ENCODE measurements at regions of chr3 and their contacts with region 1.

Region 1: GRCh38 chr3:100463002-100463401 is 29.4 kb upstream of the TMEM45A start:
- DNase-seq: no peak
- H3K4me3 ChIP-seq: no peak overlapping the region
- H3K27ac ChIP-seq: no peak overlapping the region
- H3K4me1 ChIP-seq: no peaks in the 10 kb centered on the region
- H3K27me3 ChIP-seq: no peaks in the 10 kb centered on the region
- CTCF ChIP-seq: peak; percentile 60 to 80

Region 2: DNA sequence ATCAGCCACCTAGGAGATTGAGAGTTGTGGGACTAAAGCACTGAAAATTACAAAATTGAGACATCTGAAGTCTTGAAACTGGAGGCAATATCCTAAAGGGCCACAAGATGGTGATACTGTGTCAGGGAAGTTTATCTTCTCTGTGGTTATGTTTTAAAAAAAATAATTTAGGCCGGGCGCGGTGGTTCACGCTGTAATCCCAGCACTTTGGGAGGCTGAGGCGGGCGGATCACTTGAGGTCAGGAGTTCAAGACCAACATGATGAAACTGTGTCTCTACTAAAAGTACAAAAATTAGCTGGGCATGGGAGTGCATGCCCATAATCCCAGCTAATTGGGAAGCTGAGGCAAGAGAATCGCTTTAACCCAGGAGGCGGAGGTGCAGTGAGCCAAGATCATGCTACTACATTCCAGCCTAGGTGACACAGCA is 146.3 kb before region 1 on chr3:
- intact Hi-C with region 1: loop called (anchors 10 kb)
- DNase-seq: peak in 1 of 2 donors; percentile 31
- H3K4me3 ChIP-seq: no peak overlapping the region
- H3K27ac ChIP-seq: peak overlapping the region in 1 of 2 donors; percentile 24
- H3K4me1 ChIP-seq: peaks cover 0 to 8% (median 2%) of the 10 kb centered on the region in 4 donors
- H3K27me3 ChIP-seq: no peaks in the 10 kb centered on the region
- CTCF ChIP-seq: peak; percentile 70 to 75

Measured in tibial artery (tissue), 4 donors.